ENCODE measurements at regions of chr12 and their contacts with region 1.

Region 1: DNA sequence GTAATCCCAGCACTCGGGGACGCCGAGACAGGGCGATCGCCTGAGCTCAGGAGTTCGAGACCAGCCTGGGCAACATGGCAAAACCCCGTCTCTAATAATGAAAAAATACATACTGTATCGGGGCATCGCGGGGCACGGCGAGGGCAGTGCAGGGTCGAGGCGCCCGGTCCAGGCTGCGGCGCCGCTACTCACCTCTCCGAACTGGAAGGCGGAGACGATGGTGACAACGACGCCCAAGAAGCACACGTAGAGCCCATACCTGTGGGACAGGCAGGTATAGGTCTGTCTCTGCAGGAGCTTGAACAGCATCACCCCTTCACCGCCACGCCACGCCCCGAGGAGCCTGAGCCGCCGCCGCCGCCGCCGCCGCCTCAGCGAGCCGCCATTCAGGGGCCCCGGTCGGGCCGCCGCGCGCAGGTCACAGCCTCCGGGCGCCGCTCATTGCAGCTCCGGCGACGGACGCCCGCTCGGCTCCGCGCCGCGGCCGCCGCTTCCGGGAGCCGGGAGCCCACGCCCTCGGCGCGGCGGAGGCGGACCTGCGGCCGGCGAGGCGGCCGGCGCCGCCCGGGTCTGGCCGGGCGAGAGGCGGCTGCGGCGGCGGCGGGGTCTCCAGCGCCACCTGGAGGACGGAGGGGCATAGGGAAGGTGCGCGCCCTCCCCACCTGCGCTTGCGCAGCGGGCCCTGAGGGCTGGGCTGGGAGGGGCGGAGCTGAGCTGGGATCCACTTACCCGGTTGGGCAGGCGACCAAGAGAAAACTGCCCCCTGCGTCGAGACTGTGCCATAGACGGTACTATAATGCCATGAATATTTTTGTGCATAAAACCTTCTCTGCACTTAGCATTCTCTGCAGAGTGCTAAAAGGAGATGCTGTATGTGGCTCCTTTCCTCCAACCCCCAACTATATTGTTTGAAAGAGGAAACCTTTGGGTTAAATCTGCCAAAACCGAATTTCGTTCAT is at the start of gene GNPTAB:
- DNase-seq: peak; percentile 93 to 97 (median 96)
- H3K4me3 ChIP-seq: peak within 1 kb of the TSS; percentile 88 to 100 (median 91)
- H3K27ac ChIP-seq: peak within 1 kb of the TSS; percentile 15 to 76
- H3K4me1 ChIP-seq: peaks cover 28 to 48% (median 38%) of the 10 kb centered on the region in 4 experiments
- H3K27me3 ChIP-seq: no peaks in the 10 kb centered on the region

Region 2: DNA sequence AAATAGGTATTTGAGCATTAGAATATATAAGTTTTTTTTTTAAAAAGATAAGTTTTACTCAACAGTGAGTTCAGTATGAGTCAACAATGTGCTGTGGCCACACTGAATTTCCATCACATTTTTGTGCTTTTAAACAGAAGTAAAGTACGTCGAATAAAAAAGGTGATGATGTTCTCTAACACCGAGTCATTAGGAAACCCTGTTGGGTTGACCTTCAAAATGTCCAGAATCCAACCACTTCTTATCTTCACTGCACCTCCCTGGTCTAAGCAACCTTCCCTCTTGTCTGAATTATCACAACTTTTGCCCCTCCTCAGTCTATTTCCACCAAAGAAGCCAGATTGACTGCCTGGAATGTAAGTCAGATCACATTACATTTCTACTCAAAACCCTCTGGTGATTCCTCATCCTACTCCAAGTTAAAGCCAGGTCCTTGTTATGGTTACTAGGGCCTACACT is 48.3 kb before region 1 on chr12:
- CTCF ChIA-PET with region 1: interaction called, 132 read pairs
- POLR2A ChIA-PET with region 1: no interaction called
- DNase-seq: no peak
- H3K4me3 ChIP-seq: no peak overlapping the region
- H3K27ac ChIP-seq: no peak overlapping the region
- H3K4me1 ChIP-seq: peaks cover 21 to 69% (median 40%) of the 10 kb centered on the region in 4 experiments
- H3K27me3 ChIP-seq: no peaks in the 10 kb centered on the region

Region 3: GRCh38 chr12:101792051-101792931 is 38.4 kb before region 1 on chr12:
- CTCF ChIA-PET with region 1: interaction called, 33 read pairs
- POLR2A ChIA-PET with region 1: interaction called, 3 read pairs
- DNase-seq: no peak
- H3K4me3 ChIP-seq: no peak overlapping the region
- H3K27ac ChIP-seq: no peak overlapping the region
- H3K4me1 ChIP-seq: peaks cover 0 to 53% (median 5%) of the 10 kb centered on the region in 4 experiments
- H3K27me3 ChIP-seq: no peaks in the 10 kb centered on the region

Measured in common myeloid progenitor, CD34-positive (primary cell).